Astrocyte of the cerebellum (primary cell): ENCODE measurements at regions of chr11 and their contacts with region 1.

Region 1: DNA sequence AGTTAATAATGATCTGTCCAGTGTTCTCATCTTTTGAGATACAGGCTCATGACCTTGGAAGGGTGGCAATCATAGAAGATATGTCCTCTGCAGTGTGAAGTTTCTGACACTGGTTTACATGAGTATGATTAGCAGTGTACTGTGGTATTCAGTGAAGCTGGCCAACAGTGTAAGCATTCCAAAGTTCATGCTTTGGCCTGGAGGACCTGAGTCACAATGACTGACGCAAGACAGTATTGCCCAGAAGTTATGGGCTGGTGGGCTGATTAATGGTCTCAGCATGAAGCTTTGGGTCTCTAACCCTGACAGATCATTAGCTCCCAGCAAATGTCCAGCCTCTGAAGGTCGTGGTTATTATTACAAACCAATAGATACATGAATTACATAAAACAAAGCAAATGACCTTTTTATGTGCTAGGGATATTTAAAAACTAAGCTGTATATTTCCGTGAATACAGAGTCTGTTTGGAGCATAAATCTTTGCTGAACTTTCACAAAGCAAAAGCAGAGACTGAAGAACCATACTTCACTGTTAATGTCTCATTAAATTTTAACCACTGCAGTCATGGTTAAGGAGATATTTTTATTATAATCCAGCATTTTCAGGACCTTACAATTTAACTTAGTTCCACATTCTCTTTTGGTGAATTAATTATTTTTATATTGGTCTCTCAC is 28.3 kb upstream of the USP47 start:
- DNase-seq: peak; percentile 82
- H3K4me3 ChIP-seq: no peak overlapping the region
- CTCF ChIP-seq: no peak

Region 2: DNA sequence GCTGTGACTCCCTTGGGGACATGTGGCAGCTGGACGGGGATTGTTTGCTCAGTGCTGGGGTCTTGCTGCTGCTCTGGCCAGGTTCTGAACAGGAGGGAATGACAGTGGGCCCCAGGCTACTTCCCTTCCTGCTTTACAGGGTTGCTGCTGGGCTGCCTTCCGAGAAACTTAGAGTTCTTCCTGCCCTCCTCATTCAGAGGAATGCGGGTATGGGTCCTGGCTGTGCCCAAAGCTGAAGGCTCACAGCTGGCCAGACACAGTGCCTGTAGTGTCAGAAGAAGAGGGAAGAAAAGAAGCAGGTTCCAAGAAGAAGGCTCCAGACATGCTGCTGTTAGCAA is 455.6 kb after region 1 on chr11:
- in situ Hi-C with region 1: loop called (anchors 25 kb)
- DNase-seq: no peak
- H3K4me3 ChIP-seq: no peak overlapping the region
- CTCF ChIP-seq: no peak